Heart right ventricle (tissue), 16 donors: ENCODE measurements at regions of chr3 and their contacts with region 1.

Region 1: DNA sequence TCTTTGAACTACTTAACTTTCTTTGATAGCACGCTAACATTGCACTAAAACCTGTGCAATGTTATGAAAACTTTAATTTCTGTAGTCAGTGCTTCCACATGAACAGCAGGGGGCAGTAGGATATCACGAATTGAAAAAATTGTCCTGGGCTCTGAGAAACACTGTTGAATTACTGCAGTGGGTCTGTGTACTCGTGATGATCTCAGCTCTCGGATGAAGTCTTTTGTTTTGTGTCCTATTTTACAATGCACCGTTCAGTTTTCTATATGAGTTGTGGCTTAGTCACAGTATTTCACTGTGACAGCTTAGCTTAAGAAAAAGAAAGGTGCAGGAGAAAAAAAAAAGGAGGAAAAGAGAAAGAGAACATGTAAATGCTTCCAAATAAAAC is 141.3 kb upstream of the CCDC54 start:
- DNase-seq: peak in 1 of 2 donors; percentile 78
- ATAC-seq: peak; percentile 64 to 81 (median 72)
- H3K4me3 ChIP-seq: peak overlapping the region; percentile 22 to 61 (median 50)
- H3K27ac ChIP-seq: peak overlapping the region in 9 of 10 donors; percentile 26 to 76 (median 58)
- H3K4me1 ChIP-seq: peaks cover 0 to 25% (median 11%) of the 10 kb centered on the region in 9 donors
- H3K27me3 ChIP-seq: no peaks in the 10 kb centered on the region
- CTCF ChIP-seq: peak; percentile 79 to 94 (median 89)

Region 2: GRCh38 chr3:107271787-107272387 is 36.0 kb after region 1 on chr3:
- intact Hi-C with region 1: loop called in 1 of 10 experiments (anchors 5 kb)
- DNase-seq: no peak
- ATAC-seq: peak in 4 of 8 donors; percentile 55 to 75 (median 72)
- H3K4me3 ChIP-seq: no peak overlapping the region
- H3K27ac ChIP-seq: no peak overlapping the region
- H3K4me1 ChIP-seq: no peaks in the 10 kb centered on the region
- H3K27me3 ChIP-seq: no peaks in the 10 kb centered on the region
- CTCF ChIP-seq: peak; percentile 24 to 76 (median 68)

Region 3: GRCh38 chr3:107522510-107523288 is 286.8 kb after region 1 on chr3 and contains the start of gene BBX:
- intact Hi-C with region 1: loop called in 4 of 10 experiments (anchors 10 kb)
- DNase-seq: peak; percentile 90 to 95
- ATAC-seq: peak; percentile 96 to 98 (median 98)
- H3K4me3 ChIP-seq: peak within 1 kb of the TSS; percentile 70 to 94 (median 91)
- H3K27ac ChIP-seq: peak within 1 kb of the TSS; percentile 63 to 96 (median 94)
- H3K4me1 ChIP-seq: peaks cover 0 to 20% (median 14%) of the 10 kb centered on the region in 9 donors
- H3K27me3 ChIP-seq: no peaks in the 10 kb centered on the region
- CTCF ChIP-seq: no peak
- total RNA-seq, gene BBX: 21.3 to 49.8 (median 39.7) TPM

Region 4: GRCh38 chr3:107660306-107660976 is 424.5 kb after region 1 on chr3:
- intact Hi-C with region 1: loop called in 3 of 10 experiments (anchors 10 kb)
- DNase-seq: no peak
- ATAC-seq: no peak
- H3K4me3 ChIP-seq: no peak overlapping the region
- H3K27ac ChIP-seq: no peak overlapping the region
- H3K4me1 ChIP-seq: peaks cover 0 to 37% (median 25%) of the 10 kb centered on the region in 9 donors
- H3K27me3 ChIP-seq: no peaks in the 10 kb centered on the region
- CTCF ChIP-seq: peak; percentile 9 to 73 (median 62)

Region 5: DNA sequence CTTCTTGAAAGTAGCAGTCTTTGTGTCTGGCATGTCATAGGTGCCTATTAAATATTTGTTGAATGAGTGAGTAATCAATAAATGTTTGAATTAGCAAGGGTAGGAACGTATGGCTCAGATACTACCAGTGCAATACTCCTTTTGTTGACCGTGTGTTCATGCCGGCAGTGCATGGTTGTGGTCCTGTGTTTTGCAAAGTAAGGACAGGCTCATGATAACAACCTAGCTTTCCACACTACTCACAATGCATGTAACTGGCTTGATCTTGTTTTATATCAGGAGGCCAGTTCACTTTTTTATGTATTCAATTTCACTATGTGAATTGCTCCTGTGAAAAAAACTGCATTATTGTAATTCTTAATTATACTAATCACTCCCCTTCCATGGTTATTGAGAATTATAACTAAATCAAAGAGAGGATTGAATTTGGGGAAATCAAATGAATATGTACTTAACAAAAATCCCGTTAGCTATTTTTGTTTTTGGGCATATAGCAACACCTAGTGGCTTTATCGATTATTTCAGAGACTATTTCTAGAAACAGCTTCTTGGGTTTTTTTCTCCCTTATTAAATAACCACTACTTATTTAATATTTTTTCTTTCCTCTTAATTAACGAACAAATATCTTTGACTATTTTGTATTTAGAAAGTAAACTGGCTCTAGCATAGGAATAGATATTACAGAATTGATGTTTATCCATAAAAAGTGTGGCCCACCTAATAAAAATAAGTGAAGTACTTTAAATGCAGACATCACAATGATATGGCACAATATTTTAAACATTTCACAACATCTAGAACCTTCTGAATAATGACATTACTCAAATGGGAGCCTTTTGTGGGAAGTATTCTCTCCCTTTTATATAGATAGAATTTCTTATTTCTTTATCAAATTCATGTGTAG is 505.3 kb after region 1 on chr3:
- intact Hi-C with region 1: loop called in 6 of 10 experiments (anchors 5 to 10 kb)
- DNase-seq: no peak
- ATAC-seq: no peak
- H3K4me3 ChIP-seq: no peak overlapping the region
- H3K27ac ChIP-seq: no peak overlapping the region
- H3K4me1 ChIP-seq: peaks cover 0 to 4% (median 0%) of the 10 kb centered on the region in 9 donors
- H3K27me3 ChIP-seq: no peaks in the 10 kb centered on the region
- CTCF ChIP-seq: peak; percentile 39 to 78 (median 62)

Region 6: GRCh38 chr3:107927361-107928083 is 691.6 kb after region 1 on chr3:
- intact Hi-C with region 1: loop called in 6 of 10 experiments (anchors 10 kb)
- DNase-seq: peak; percentile 43 to 73
- ATAC-seq: peak; percentile 95 to 99 (median 97)
- H3K4me3 ChIP-seq: peak overlapping the region; percentile 23 to 72 (median 58)
- H3K27ac ChIP-seq: peak overlapping the region in 1 of 10 donors; percentile 5
- H3K4me1 ChIP-seq: peaks cover 0 to 18% (median 8%) of the 10 kb centered on the region in 9 donors
- H3K27me3 ChIP-seq: peaks cover 0 to 21% (median 0%) of the 10 kb centered on the region in 7 donors
- CTCF ChIP-seq: peak; percentile 86 to 98 (median 93)